ENCODE measurements at regions of chr12 and their contacts with region 1.

Region 1: DNA sequence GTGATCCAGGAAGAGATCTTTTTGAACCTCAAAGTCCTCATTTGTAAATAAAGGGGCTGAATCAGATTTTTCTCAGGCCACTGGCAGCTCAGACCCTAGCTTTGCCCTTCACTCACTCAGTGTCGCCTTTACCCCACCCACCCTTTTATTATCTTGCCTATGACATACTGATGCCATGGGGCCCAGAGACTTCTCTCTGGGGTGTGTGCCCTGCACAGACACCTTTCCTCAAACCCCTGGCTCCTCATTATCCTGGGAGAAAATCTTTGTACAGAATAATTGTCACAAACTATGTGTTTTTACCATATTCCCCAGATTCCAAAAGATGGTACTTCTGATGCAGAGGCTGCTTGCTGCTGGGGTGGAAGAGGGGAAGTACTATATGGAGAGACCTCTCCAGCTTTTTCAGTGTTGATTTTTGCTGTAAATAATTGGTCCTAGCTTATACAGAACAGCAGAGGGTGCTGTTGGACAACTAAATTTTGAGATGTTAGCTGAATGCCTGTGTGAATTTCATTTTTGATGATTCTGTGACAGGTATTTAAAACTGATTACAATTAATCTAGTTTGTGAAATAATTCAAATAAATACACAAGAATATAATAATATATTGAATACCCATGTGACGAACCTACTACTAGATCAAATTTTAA is 53.9 kb upstream of the DCD start:
- DNase-seq: peak; percentile 42
- CTCF ChIP-seq: peak; percentile 51

Region 2: GRCh38 chr12:54689984-54690383 is 12.1 kb before region 1 on chr12:
- CTCF ChIA-PET with region 1: interaction called, 18 read pairs
- POLR2A ChIA-PET with region 1: no interaction called
- DNase-seq: no peak
- CTCF ChIP-seq: no peak

Region 3: GRCh38 chr12:54723379-54724256 is 21.6 kb after region 1 on chr12:
- CTCF ChIA-PET with region 1: interaction called, 16 read pairs
- POLR2A ChIA-PET with region 1: no interaction called
- DNase-seq: no peak
- CTCF ChIP-seq: peak; percentile 48

Measured in GM10248 (cell line).